ENCODE measurements at regions of chr7 and their contacts with region 1.

Region 1: GRCh38 chr7:131424219-131424822 is 96.6 kb downstream of the MKLN1 start:
- DNase-seq: peak in 2 of 4 experiments; percentile 22 to 32
- ATAC-seq: peak; percentile 89
- H3K4me3 ChIP-seq: no peak overlapping the region
- H3K27ac ChIP-seq: no peak overlapping the region
- H3K4me1 ChIP-seq: no peaks in the 10 kb centered on the region
- H3K27me3 ChIP-seq: no peaks in the 10 kb centered on the region
- CTCF ChIP-seq: peak; percentile 24 to 77 (median 55); a peak in 5 of 6 replicates
- EP300 ChIP-seq: no peak
- POLR2A ChIP-seq: no peak
- RAD21 ChIP-seq: peak; percentile 58 to 74

Region 2: DNA sequence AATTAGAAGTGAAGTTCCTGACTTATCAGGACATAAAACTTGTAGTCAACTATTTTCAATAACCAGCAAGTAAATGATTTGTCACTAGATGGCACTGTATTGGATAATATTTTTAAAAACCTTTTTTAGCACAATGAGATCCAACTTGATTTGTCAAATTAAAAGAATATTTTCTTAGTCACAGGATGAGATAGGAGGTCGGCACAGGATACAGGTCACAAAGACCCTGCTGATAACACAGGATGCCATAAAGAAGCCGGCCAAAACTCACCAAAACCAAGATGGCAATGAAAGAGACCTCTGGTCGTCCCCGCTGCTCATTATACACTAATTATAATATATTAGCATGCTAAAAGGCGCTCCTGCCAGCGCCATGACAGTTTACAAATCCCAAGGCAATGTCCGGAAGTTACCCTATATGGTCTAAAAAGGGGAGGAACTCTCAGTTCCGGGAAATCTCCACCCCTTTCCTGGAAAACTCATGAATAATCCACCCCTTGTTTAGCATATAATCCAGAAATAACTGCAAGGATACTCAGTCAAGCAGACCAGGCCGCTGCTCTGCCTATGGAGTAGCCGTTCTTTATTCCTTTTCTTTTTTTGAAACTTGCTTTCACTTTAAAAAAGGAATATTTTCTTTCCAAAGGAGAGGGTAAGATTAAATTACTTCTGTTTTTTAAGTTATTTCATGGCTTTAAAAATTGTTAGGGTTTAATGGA is 352.4 kb before region 1 on chr7:
- CTCF ChIA-PET with region 1: interaction called, 3 read pairs
- POLR2A ChIA-PET with region 1: no interaction called
- in situ Hi-C with region 1: no loop called
- intact Hi-C with region 1: loop called (anchors 2 kb)
- DNase-seq: peak; percentile 61 to 99 (median 67)
- ATAC-seq: peak; percentile 90
- H3K4me3 ChIP-seq: peak overlapping the region; percentile 15; the same call in 1 of the 2 replicates
- H3K27ac ChIP-seq: peak overlapping the region; percentile 80
- H3K4me1 ChIP-seq: peaks cover 10 to 34% of the 10 kb centered on the region in 2 experiments
- H3K27me3 ChIP-seq: no peaks in the 10 kb centered on the region
- CTCF ChIP-seq: peak; percentile 10 to 71 (median 55); a peak in 5 of 6 replicates
- EP300 ChIP-seq: peak; percentile 64
- POLR2A ChIP-seq: peak; percentile 63; the same call in 1 of the 2 replicates
- RAD21 ChIP-seq: peak; percentile 53 to 56; a peak in 3 of 4 replicates

Region 3: GRCh38 chr7:131225619-131226513 is 198.5 kb before region 1 on chr7:
- CTCF ChIA-PET with region 1: no interaction called
- POLR2A ChIA-PET with region 1: no interaction called
- in situ Hi-C with region 1: no loop called
- intact Hi-C with region 1: loop called (anchors 10 kb)
- DNase-seq: no peak
- ATAC-seq: peak; percentile 28
- H3K4me3 ChIP-seq: no peak overlapping the region
- H3K27ac ChIP-seq: no peak overlapping the region
- H3K4me1 ChIP-seq: peaks cover 0 to 6% of the 10 kb centered on the region in 2 experiments; a peak in 2 of 5 replicates
- H3K27me3 ChIP-seq: peaks cover 7 to 12% of the 10 kb centered on the region in 2 experiments
- CTCF ChIP-seq: no peak
- EP300 ChIP-seq: no peak
- POLR2A ChIP-seq: no peak
- RAD21 ChIP-seq: no peak

Region 4: GRCh38 chr7:131327626-131328376 is 96.5 kb before region 1 on chr7 and contains the start of gene MKLN1:
- CTCF ChIA-PET with region 1: no interaction called
- POLR2A ChIA-PET with region 1: interaction called, 4 read pairs
- in situ Hi-C with region 1: no loop called
- intact Hi-C with region 1: loop called (anchors 1 kb)
- DNase-seq: peak; percentile 98
- ATAC-seq: peak; percentile 96
- H3K4me3 ChIP-seq: peak within 1 kb of the TSS; percentile 87
- H3K27ac ChIP-seq: peak within 1 kb of the TSS; percentile 94
- H3K4me1 ChIP-seq: peaks cover 5 to 33% of the 10 kb centered on the region in 2 experiments; a peak in 3 of 5 replicates
- H3K27me3 ChIP-seq: no peaks in the 10 kb centered on the region
- CTCF ChIP-seq: 0 out of 6 replicates have a peak, but pooled peaks of 1 of the 3 experiments have one; percentile 3
- EP300 ChIP-seq: peak; percentile 28; the same call in 1 of the 2 replicates
- POLR2A ChIP-seq: peak; percentile 99
- RAD21 ChIP-seq: peak in 1 of 2 experiments; percentile 9; a peak in 1 of 4 replicates
- polyA plus RNA-seq, gene MKLN1: 27.0 to 68.8 TPM

Measured in K562 (cell line).